ENCODE measurements at regions of chr10 and their contacts with region 1.

Region 1: DNA sequence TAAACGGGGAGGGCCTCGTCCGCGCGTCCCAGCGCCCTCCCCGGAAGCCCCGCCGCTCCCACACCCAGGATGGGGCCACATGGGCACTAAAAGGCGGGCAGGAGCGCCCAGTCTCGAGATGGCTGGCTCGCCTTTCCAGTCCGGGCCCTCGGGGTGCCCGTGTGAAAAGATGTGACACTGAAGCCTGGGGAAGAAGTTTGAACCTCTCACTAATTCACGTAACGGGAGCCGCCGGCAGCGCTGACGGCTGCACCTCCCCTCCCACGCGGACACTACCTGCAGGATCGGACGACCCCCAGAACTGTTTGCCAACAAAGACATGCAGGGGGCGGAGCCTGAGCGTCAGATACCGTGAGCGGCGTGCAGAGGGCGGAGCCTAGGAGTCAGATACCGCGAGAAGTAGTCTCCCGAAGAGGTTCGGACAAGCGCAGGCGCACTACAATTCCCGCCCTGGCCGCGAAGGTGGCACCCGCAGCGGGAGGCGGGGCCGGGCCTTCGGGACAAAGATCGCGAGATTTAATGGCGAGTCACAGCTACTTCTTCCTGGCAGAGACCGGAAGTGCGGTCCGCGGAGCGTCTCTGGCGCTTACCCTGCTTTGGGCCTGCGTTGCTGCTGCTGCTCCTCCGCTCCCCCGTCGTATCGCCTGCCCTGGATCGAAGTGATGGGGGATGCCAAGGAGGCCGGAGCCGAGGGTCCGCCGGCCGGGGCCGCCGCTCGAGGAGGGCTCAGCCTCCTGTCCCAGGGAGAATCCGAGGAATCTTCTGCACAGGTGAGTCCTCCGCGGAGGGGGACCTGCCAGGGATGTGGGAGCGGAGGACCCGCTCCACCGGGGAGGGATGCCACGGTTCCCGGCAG is at the start of gene EDRF1:
- DNase-seq: peak; percentile 99
- ATAC-seq: peak; percentile 96
- H3K4me3 Mint-ChIP-seq: peak within 1 kb of the TSS; percentile 92
- H3K27ac Mint-ChIP-seq: peak within 1 kb of the TSS; percentile 98
- H3K4me1 Mint-ChIP-seq: peaks cover 29% of the 10 kb centered on the region
- H3K27me3 Mint-ChIP-seq: no peaks in the 10 kb centered on the region
- total RNA-seq, gene EDRF1: 33.7 to 34.1 TPM

Region 2: GRCh38 chr10:125707541-125708468 is 11.6 kb before region 1 on chr10:
- CTCF ChIA-PET with region 1: no interaction called
- POLR2A ChIA-PET with region 1: no interaction called
- DNase-seq: no peak
- ATAC-seq: no peak
- H3K4me3 Mint-ChIP-seq: no peak overlapping the region
- H3K27ac Mint-ChIP-seq: no peak overlapping the region
- H3K4me1 Mint-ChIP-seq: no peaks in the 10 kb centered on the region
- H3K27me3 Mint-ChIP-seq: peaks cover 20% of the 10 kb centered on the region

Region 3: GRCh38 chr10:125734823-125735222 is 15.4 kb after region 1 on chr10:
- CTCF ChIA-PET with region 1: interaction called, 3 read pairs
- POLR2A ChIA-PET with region 1: interaction called, 14 read pairs
- DNase-seq: no peak
- ATAC-seq: no peak
- H3K4me3 Mint-ChIP-seq: no peak overlapping the region
- H3K27ac Mint-ChIP-seq: no peak overlapping the region
- H3K4me1 Mint-ChIP-seq: no peaks in the 10 kb centered on the region
- H3K27me3 Mint-ChIP-seq: no peaks in the 10 kb centered on the region